Heart right ventricle (tissue), 16 donors: ENCODE measurements at regions of chr16 and their contacts with region 1.

Region 1: DNA sequence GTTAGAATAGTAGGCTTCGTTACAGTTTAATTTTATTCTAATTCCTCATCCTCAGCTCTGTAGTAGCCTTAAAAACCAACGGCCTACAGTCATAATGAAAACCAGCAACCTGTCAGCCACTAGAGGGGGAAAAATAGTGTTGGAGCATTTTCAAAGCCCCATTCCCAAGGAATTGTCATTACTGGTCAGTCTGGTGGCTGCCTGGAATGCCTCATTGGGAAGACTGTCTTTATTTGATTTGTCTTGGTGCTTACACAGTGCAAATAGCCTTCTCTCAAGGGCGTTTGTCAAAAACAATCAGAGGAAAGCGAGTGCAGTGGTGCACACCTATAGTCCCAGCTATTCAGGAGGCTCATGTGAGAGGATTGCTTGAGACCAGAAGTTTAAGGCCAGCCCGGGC is 4.7 kb downstream of the LPCAT2 start:
- DNase-seq: no peak
- ATAC-seq: no peak
- H3K4me3 ChIP-seq: no peak overlapping the region
- H3K27ac ChIP-seq: no peak overlapping the region
- H3K4me1 ChIP-seq: peaks cover 0 to 24% (median 4%) of the 10 kb centered on the region in 9 donors
- H3K27me3 ChIP-seq: peaks cover 0 to 3% (median 0%) of the 10 kb centered on the region in 7 donors
- CTCF ChIP-seq: no peak

Region 2: GRCh38 chr16:55333684-55334083 is 179.9 kb before region 1 on chr16:
- intact Hi-C with region 1: no loop called
- DNase-seq: no peak
- ATAC-seq: no peak
- H3K4me3 ChIP-seq: no peak overlapping the region
- H3K27ac ChIP-seq: no peak overlapping the region
- H3K4me1 ChIP-seq: peaks cover 0 to 27% (median 9%) of the 10 kb centered on the region in 9 donors
- H3K27me3 ChIP-seq: peaks cover 7 to 56% (median 33%) of the 10 kb centered on the region in 7 donors
- CTCF ChIP-seq: no peak

Region 3: DNA sequence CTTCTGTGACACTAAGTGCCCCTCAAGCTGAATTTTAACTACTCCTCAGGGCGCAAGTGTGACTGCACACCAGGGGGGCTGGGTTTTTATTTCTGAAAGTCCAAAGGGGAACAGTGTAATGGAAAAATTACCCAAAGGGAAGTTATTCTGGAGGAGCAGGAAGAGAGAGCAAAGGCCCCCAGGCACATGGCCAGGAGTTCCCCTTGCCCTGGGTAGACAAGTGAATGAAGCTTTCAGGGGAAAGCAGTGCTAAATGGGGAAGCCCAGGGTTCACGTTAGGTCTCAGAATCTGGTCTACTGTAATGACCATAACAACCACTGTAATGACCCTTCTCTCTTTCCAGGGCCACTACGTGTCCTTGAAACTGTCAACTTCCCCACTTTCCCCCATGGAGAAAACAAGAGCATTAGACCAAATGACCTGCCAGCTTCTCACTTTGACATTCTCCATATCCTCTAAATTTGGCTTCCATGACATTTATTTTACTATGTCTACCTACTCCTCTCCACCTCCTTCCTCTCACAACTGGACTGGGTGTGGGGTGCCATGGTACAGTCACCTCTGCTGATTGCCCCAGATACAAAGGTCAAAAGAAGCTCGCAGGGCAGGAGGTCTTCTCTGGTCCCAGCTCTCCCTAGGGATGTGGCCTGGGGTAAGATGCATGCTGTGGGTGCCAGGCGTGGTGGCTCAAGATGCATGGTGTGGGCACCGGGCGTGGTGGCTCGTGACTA is 68.7 kb before region 1 on chr16:
- intact Hi-C with region 1: no loop called
- DNase-seq: peak; percentile 40 to 43
- ATAC-seq: peak; percentile 48 to 93 (median 80)
- H3K4me3 ChIP-seq: peak overlapping the region in 2 of 10 donors; percentile 13 to 26
- H3K27ac ChIP-seq: peak overlapping the region in 1 of 10 donors; percentile 21
- H3K4me1 ChIP-seq: peaks cover 0 to 21% (median 7%) of the 10 kb centered on the region in 9 donors
- H3K27me3 ChIP-seq: no peaks in the 10 kb centered on the region
- CTCF ChIP-seq: no peak

Region 4: DNA sequence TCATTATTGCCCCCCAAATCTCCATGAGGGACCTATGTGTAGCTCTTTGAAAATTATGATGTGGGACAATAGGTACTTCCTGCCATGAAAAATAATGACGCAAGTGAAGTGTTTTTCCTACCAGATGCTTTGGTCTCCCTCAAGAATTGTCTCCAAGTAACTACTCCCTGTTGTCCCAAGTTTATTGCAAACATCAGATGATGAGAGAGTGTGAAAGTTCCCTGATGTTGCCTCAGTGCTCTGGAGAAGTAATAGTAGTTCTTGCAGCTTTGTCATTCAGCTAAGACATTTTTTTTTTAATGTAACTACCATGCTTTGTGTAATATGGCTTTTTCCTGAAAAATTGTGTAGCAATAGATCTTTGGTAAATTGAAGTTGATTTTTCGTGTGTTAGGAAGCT is 15.4 kb after region 1 on chr16:
- intact Hi-C with region 1: loop called in 1 of 10 experiments (anchors 2 kb)
- DNase-seq: no peak
- ATAC-seq: peak in 6 of 8 donors; percentile 55 to 86 (median 80)
- H3K4me3 ChIP-seq: no peak overlapping the region
- H3K27ac ChIP-seq: peak overlapping the region in 5 of 10 donors; percentile 0 to 27 (median 16)
- H3K4me1 ChIP-seq: peaks cover 0 to 16% (median 0%) of the 10 kb centered on the region in 9 donors
- H3K27me3 ChIP-seq: no peaks in the 10 kb centered on the region
- CTCF ChIP-seq: no peak

Region 5: DNA sequence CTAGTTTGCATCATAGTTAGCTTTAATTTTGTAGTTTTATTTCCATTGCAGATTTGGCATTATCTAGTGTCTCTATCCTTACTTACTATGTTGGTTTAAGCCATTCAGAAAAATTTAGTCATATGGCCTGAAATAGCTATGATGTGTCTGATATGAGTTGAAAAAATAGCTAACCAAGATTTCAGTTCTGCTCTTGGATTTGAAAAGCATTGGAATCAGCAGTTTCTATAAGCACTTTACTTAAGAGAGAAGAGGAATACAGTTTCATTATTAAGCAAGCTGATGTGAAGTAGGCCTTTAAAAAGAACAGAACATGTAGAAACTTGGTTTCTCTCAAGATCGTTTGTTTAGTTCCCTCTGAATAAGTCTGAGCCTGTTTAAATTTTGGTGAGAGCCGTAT is 21.1 kb after region 1 on chr16:
- intact Hi-C with region 1: loop called in 1 of 10 experiments (anchors 1 kb)
- DNase-seq: no peak
- ATAC-seq: peak in 3 of 8 donors; percentile 30 to 49 (median 41)
- H3K4me3 ChIP-seq: no peak overlapping the region
- H3K27ac ChIP-seq: no peak overlapping the region
- H3K4me1 ChIP-seq: peaks cover 0 to 29% (median 0%) of the 10 kb centered on the region in 9 donors
- H3K27me3 ChIP-seq: no peaks in the 10 kb centered on the region
- CTCF ChIP-seq: no peak